Breast epithelium (tissue), 4 donors: ENCODE measurements at regions of chr3 and their contacts with region 1.

Region 1: DNA sequence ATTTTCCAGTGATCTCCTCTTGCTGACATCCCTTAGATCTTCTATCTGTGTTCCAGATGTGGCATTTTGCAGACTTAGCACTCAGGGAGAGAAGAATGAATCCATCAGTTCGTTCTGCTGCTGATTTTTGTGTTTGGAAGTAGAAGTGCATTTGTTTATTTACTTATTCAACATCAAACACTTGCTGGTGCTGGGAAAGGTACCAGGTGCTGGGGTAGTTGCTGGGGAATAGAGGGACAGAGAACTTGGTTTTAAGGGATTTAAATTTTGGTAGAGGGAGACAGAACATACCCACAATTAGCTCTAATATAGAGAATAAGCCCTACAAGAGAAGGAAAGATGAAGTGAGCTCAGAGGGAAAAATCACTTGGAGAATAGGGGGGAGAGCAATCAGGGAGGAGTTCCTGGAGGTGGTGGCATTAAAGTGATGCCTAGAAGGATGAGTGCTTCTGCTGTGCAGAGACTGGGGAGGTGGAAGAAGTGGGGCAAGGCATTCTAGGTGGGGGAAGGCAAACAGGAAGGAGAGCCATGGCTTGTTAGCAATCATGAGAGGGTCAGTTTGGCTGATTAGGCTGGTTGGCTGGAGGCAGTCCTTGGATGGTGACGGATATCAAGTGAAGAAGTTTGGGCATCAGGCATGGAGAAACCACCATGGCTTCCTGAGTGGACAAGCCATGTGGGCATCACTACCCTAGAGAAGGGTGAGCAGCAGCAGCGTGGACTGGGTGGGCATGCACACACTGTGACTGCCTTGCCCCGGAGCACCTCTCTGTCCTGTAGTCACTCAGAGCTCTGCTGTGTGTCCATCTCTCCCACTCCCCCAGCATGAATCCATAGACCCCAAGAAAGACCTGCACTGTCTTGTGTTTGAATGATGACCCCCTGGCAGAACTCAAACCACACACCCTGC is 197.3 kb downstream of the OPA1 start:
- DNase-seq: no peak
- H3K4me3 ChIP-seq: no peak overlapping the region
- H3K27ac ChIP-seq: peak overlapping the region in 1 of 2 donors; percentile 61
- H3K4me1 ChIP-seq: peaks cover 0 to 7% of the 10 kb centered on the region in 2 donors
- H3K27me3 ChIP-seq: no peaks in the 10 kb centered on the region
- CTCF ChIP-seq: no peak
- POLR2A ChIP-seq: no peak

Region 2: GRCh38 chr3:193827040-193827670 is 36.8 kb after region 1 on chr3:
- intact Hi-C with region 1: loop called (anchors 1 kb)
- DNase-seq: no peak
- H3K4me3 ChIP-seq: no peak overlapping the region
- H3K27ac ChIP-seq: peak overlapping the region; percentile 8 to 75
- H3K4me1 ChIP-seq: peaks cover 0 to 8% of the 10 kb centered on the region in 2 donors
- H3K27me3 ChIP-seq: no peaks in the 10 kb centered on the region
- CTCF ChIP-seq: no peak
- POLR2A ChIP-seq: no peak

Region 3: DNA sequence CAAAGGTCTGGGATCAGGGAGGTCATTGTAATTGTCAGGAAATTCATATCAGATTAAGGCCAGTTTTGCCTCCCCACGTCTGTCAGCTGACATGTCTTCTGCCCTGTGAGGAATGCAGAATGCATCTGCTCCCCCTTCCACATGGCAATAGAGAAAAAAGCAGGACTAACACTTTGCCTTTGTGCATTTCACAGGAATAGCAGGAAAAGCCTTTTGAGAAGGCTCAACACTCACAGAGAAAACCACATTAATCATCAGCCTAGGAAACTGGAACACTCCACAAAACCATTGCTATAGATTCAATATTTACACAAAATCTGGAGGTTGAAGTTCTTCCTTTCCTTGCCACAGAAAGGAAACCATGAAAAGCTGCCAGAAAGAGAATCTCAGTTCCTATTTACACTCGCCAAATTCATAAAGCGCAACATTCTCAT is 180.4 kb after region 1 on chr3:
- intact Hi-C with region 1: no loop called
- DNase-seq: no peak
- H3K4me3 ChIP-seq: no peak overlapping the region
- H3K27ac ChIP-seq: no peak overlapping the region
- H3K4me1 ChIP-seq: no peaks in the 10 kb centered on the region
- H3K27me3 ChIP-seq: no peaks in the 10 kb centered on the region
- CTCF ChIP-seq: no peak
- POLR2A ChIP-seq: no peak

Region 4: DNA sequence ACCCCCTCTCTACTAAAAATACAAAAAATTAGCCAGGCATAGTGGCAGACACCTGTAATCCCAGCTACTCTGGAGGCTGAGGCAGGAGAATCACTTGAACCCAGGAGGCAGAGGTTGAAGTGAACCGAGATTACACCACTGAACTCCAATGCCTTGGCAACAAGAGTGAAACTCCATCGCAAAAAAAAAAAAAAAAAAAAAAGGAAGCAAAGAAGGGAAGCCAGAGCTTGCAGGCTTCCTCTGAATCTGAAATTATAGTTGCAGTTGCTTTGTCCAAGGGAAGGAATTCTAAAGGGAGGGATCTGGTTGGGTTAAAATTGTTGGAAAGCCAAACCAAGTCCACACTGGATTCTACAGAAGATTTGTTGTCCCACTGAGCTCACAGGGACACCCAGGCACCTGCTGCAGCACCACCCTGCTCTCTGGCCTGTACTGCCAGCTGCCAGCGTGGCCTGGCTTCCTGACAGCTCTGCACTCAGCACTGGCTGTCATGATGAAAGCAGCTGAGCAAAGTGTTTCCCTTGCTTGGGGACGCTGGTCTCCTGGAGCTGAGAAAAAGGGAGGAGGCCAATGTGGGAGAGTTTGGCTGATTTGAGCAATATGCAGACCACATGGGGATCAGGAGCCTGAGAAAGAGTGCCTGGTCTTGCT is 256.8 kb after region 1 on chr3:
- intact Hi-C with region 1: no loop called
- DNase-seq: peak in 1 of 2 donors; percentile 62
- H3K4me3 ChIP-seq: no peak overlapping the region
- H3K27ac ChIP-seq: peak overlapping the region in 1 of 2 donors; percentile 44
- H3K4me1 ChIP-seq: no peaks in the 10 kb centered on the region
- H3K27me3 ChIP-seq: no peaks in the 10 kb centered on the region
- CTCF ChIP-seq: no peak
- POLR2A ChIP-seq: no peak